Naive thymus-derived CD4-positive, alpha-beta T cell (primary cell): ENCODE measurements at regions of chr16 and their contacts with region 1.

Region 1: GRCh38 chr16:85114909-85115567 is 2.8 kb upstream of the CIBAR2 start:
- DNase-seq: peak; percentile 40 to 87 (median 62)
- ATAC-seq: peak; percentile 92
- H3K4me3 ChIP-seq: peak overlapping the region; percentile 11
- H3K4me3 Mint-ChIP-seq: peak overlapping the region; percentile 53 to 86 (median 74)
- H3K27ac ChIP-seq: no peak overlapping the region
- H3K27ac Mint-ChIP-seq: peak overlapping the region in 8 of 9 donors; percentile 45 to 90 (median 72)
- H3K4me1 ChIP-seq: peaks cover 3 to 10% of the 10 kb centered on the region in 2 donors
- H3K4me1 Mint-ChIP-seq: peaks cover 0 to 15% (median 11%) of the 10 kb centered on the region in 7 donors
- H3K27me3 ChIP-seq: no peaks in the 10 kb centered on the region
- H3K27me3 Mint-ChIP-seq: no peaks in the 10 kb centered on the region

Region 2: GRCh38 chr16:85104821-85105391 is 10.1 kb before region 1 on chr16:
- CTCF ChIA-PET with region 1: interaction called, 8 read pairs
- POLR2A ChIA-PET with region 1: interaction called, 3 read pairs
- intact Hi-C with region 1: loop called in 1 of 2 experiments (anchors 1 kb)
- DNase-seq: peak in 6 of 9 donors; percentile 16 to 54 (median 46)
- ATAC-seq: peak; percentile 87
- H3K4me3 ChIP-seq: no peak overlapping the region
- H3K4me3 Mint-ChIP-seq: peak overlapping the region; percentile 16 to 80 (median 72)
- H3K27ac ChIP-seq: peak overlapping the region; percentile 49
- H3K27ac Mint-ChIP-seq: peak overlapping the region; percentile 54 to 96 (median 90)
- H3K4me1 ChIP-seq: peaks cover 26 to 40% of the 10 kb centered on the region in 2 donors
- H3K4me1 Mint-ChIP-seq: peaks cover 16 to 50% (median 47%) of the 10 kb centered on the region in 7 donors
- H3K27me3 ChIP-seq: no peaks in the 10 kb centered on the region
- H3K27me3 Mint-ChIP-seq: no peaks in the 10 kb centered on the region